Activated B cell treated with CpG ODN at 0.5 μM for 24 hours (primary cell): ENCODE measurements at regions of chr11 and their contacts with region 1.

Region 1: DNA sequence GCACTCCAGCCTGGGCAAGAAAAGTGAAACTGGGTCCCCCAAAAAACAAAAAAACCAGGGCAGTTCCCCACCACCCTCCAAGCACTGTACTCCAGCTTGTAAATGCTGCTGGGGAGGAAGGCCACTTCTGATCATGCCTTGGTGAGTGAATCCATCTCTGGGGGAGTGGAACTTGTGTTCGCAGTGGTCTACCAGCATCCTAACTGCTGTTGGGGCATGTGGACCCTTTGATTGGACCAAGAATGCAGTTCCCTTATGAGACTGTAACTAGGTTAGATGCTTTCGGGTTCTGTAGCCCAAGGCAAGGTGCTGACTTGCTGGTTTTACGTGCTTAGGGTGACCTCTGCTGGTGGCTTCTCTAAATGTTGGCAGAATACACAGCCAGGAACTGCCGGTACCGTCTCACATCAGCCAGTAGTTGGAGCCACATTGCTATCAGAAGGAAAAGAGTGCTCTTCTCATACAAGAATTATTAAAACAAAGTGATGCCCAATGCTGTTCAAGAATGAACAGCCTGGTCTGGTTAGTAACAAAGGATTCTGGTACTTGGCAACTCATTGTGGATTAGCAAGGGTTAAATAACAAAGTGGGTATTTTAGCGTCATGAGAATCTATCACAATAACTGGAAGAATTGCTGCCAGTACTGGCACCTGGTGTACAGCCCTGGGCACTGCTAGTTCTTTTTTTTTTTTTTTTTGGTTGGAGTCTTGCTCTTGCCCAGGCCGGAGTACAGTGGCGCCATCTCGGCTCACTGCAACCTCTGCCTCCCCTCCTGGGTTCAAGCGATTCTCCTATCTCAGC is 13.0 kb downstream of the EIF1AD start:
- DNase-seq: peak; percentile 67
- ATAC-seq: peak; percentile 99
- H3K4me3 Mint-ChIP-seq: no peak overlapping the region
- H3K27ac Mint-ChIP-seq: peak overlapping the region; percentile 62
- H3K4me1 Mint-ChIP-seq: peaks cover 5% of the 10 kb centered on the region
- H3K27me3 Mint-ChIP-seq: no peaks in the 10 kb centered on the region
- CTCF ChIP-seq: peak; percentile 75

Region 2: DNA sequence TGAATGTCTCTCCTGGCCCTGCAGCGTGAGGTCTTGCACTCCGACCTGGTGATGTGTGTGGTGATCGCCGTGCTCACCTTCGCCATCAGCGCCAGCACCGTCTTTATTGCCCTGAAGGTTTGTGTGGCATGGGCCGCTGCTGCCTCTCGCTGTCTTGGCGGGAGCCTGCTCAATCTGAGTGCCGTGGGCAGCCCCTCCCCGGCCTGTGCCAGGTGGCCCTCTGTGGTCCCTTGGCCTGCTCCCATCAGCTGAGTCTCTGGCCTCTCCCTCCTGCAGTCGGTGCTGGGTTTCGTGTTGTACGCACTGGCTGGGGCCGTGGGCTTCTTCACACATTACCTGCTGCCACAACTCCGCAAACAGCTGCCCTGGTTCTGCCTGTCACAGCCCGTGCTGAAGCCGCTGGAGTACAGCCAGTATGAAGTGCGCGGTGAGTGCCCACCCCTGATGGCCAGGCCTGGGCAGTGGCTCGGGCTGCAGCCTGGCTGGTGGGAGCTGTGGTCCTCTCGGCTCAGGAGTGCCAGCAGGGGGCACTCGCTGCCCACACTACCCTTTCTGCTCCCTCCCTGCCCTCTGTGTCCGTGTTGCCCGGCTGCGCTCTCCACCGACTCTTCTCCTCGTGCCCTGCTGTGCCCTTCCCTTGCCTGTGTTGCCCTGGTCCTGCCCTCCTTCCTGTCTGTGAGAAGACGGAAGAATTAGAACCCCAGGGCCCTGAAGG is 363.2 kb before region 1 on chr11:
- CTCF ChIA-PET with region 1: no interaction called
- POLR2A ChIA-PET with region 1: no interaction called
- intact Hi-C with region 1: loop called (anchors 1 kb)
- DNase-seq: peak; percentile 65
- ATAC-seq: peak; percentile 96
- H3K4me3 Mint-ChIP-seq: no peak overlapping the region
- H3K27ac Mint-ChIP-seq: peak overlapping the region; percentile 52
- H3K4me1 Mint-ChIP-seq: peaks cover 8% of the 10 kb centered on the region
- H3K27me3 Mint-ChIP-seq: no peaks in the 10 kb centered on the region
- CTCF ChIP-seq: no peak

Region 3: DNA sequence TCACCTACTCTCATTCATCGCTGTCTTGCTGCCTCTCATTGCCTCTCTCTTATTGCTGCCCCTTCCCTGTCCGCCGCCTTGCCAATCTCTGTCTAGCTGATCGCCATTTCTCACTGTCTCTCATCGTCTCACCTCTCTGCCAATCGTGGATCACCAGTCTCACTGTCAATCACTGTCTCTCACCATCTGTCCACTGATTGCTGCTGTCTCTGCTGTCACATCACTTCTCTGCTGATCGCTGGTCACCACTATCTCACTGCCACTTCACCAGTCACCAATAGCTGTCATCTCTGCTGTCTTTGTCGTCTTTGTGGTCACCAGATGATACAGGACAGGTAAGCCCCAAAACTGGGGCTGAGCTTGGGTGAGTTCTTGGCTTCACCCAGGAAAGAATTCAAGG is 247.8 kb before region 1 on chr11:
- CTCF ChIA-PET with region 1: no interaction called
- POLR2A ChIA-PET with region 1: interaction called, 10 read pairs
- intact Hi-C with region 1: no loop called
- DNase-seq: no peak
- ATAC-seq: no peak
- H3K4me3 Mint-ChIP-seq: no peak overlapping the region
- H3K27ac Mint-ChIP-seq: no peak overlapping the region
- H3K4me1 Mint-ChIP-seq: peaks cover 6% of the 10 kb centered on the region
- H3K27me3 Mint-ChIP-seq: peaks cover 19% of the 10 kb centered on the region
- CTCF ChIP-seq: no peak

Region 4: GRCh38 chr11:65817835-65818742 is 170.9 kb before region 1 on chr11:
- CTCF ChIA-PET with region 1: no interaction called
- POLR2A ChIA-PET with region 1: no interaction called
- intact Hi-C with region 1: loop called (anchors 1 kb)
- DNase-seq: peak; percentile 95
- ATAC-seq: peak; percentile 95
- H3K4me3 Mint-ChIP-seq: peak overlapping the region; percentile 77
- H3K27ac Mint-ChIP-seq: peak overlapping the region; percentile 63
- H3K4me1 Mint-ChIP-seq: peaks cover 14% of the 10 kb centered on the region
- H3K27me3 Mint-ChIP-seq: no peaks in the 10 kb centered on the region
- CTCF ChIP-seq: peak; percentile 96

Region 5: DNA sequence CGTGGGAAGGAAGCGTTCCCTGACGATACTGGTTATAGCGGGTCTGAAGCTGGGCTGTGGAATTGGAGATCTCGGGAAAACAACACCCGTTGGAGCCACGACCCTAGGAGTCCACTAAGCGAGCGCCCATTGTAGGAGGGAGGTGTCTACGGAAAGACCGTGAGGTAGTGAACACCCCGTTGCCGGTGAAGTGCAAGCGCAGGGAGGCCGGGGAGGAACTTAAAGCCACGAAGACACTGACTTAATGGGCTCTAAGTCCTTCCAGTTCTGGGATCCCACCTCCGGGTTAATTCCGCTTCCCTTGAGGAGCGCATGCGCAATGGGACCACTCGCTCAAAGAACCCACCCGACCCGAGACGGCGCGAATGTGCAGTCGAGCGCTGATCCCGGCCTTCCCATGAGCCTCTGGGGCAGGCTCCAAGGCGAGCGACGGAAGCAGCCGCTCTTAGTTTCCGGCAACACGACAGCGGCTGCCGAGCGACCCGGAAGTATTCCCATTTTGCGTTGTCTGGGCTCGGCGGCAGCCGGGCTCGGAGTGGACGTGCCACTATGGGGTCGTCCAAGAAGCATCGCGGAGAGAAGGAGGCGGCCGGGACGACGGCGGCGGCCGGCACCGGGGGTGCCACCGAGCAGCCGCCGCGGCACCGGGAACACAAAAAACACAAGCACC is 27.6 kb before region 1 on chr11 and contains the start of gene SART1:
- CTCF ChIA-PET with region 1: no interaction called
- POLR2A ChIA-PET with region 1: interaction called, 4 read pairs
- intact Hi-C with region 1: loop called (anchors 1 kb)
- DNase-seq: peak; percentile 85
- ATAC-seq: peak; percentile 89
- H3K4me3 Mint-ChIP-seq: peak within 1 kb of the TSS; percentile 97
- H3K27ac Mint-ChIP-seq: peak within 1 kb of the TSS; percentile 95
- H3K4me1 Mint-ChIP-seq: peaks cover 50% of the 10 kb centered on the region
- H3K27me3 Mint-ChIP-seq: no peaks in the 10 kb centered on the region
- CTCF ChIP-seq: no peak
- total RNA-seq, gene SART1: 86.6 and 92.3 TPM in 2 replicates

Region 6: GRCh38 chr11:66011239-66011784 is 22.3 kb after region 1 on chr11:
- CTCF ChIA-PET with region 1: no interaction called
- POLR2A ChIA-PET with region 1: no interaction called
- intact Hi-C with region 1: no loop called
- DNase-seq: no peak
- ATAC-seq: no peak
- H3K4me3 Mint-ChIP-seq: no peak overlapping the region
- H3K27ac Mint-ChIP-seq: no peak overlapping the region
- H3K4me1 Mint-ChIP-seq: no peaks in the 10 kb centered on the region
- H3K27me3 Mint-ChIP-seq: peaks cover 13% of the 10 kb centered on the region
- CTCF ChIP-seq: no peak

Region 7: DNA sequence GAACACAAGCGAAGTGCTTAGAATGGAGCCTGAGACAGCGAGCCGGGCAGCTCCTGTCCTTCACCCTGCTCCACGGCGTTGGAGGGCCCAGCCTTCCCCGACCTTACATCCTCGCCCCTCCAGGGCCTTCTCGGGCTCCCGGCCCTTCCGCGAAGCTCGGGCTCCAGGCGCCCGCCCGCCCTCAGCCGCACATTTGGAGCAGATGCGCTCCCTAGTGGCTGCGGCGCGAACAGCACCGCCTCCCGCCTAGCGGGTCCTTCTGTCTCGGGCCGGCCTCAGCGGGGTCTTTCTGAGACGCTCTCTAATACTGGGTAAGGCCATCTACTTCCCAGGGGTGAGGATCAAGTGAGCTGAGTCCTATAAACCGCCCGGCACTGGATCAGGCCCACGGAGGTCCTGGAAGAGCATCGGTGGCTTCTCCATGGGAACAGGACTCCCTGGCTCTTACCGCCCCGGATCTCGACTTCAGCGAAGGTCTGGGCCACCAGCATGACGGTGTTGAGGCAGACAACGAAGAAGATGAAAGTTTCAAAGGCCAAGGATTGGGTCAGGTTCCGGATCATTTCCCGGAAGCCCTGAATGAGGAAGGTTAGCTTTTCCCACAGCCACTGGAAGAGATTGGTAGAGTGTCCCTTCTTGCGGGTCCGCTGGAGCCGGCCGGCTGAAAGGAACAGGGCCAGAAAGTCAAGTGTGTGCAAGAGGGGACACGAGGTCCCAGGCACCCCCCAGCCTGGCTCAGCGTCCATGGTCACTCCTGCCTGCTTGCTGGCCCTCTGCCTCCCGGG is 33.6 kb after region 1 on chr11:
- CTCF ChIA-PET with region 1: no interaction called
- POLR2A ChIA-PET with region 1: no interaction called
- intact Hi-C with region 1: loop called (anchors 2 kb)
- DNase-seq: peak; percentile 82
- ATAC-seq: peak; percentile 98
- H3K4me3 Mint-ChIP-seq: peak overlapping the region; percentile 24
- H3K27ac Mint-ChIP-seq: no peak overlapping the region
- H3K4me1 Mint-ChIP-seq: peaks cover 4% of the 10 kb centered on the region
- H3K27me3 Mint-ChIP-seq: peaks cover 8% of the 10 kb centered on the region
- CTCF ChIP-seq: peak; percentile 25